Activated CD8-positive, alpha-beta T cell treated with anti-CD3 and anti-CD28 coated beads, Interleukin-2, amount 10 ng/mL, durations not matched to agents 7 days and 5 days (primary cell): ENCODE measurements at regions of chr5 and their contacts with region 1.

Region 1: DNA sequence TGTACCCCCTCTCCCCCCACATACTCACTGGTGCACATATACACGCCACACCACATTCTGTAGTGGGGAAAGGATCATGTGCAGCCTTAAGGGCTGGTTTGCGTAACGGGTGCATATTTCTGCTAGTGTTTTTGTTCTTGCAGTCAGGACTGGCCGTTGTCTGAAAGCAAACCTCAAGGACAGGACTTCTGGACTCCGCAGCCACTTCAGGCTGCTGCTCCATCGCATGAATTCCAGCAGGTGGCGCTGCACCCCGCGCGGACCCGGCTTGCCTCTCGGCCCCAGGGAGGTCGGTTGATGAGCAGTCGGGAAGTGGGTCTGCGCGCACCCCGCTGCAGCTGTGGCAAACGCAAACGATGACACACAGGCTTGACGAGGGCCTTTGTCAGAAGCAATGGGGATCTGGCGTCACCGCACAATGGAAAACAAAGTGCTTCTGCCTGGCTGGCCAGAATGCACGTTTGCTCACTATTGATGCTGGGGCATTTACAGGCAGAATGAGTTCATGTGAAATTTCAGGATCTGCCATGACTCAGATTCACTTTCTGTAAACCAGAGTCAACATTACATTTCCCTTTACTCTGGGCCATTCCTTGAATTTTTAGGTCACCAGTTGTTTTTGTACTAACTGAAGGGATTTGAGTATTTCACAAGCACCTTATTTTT is 36.3 kb upstream of the GLRX start:
- DNase-seq: peak; percentile 91
- ATAC-seq: peak; percentile 96
- H3K4me3 Mint-ChIP-seq: peak overlapping the region; percentile 36
- H3K27ac Mint-ChIP-seq: peak overlapping the region; percentile 60
- H3K4me1 Mint-ChIP-seq: peaks cover 44% of the 10 kb centered on the region
- H3K27me3 Mint-ChIP-seq: peaks cover 2% of the 10 kb centered on the region

Region 2: GRCh38 chr5:94693043-94693822 is 1165.6 kb before region 1 on chr5:
- CTCF ChIA-PET with region 1: no interaction called
- POLR2A ChIA-PET with region 1: no interaction called
- DNase-seq: no peak
- ATAC-seq: no peak
- H3K4me3 Mint-ChIP-seq: no peak overlapping the region
- H3K27ac Mint-ChIP-seq: no peak overlapping the region
- H3K4me1 Mint-ChIP-seq: no peaks in the 10 kb centered on the region
- H3K27me3 Mint-ChIP-seq: no peaks in the 10 kb centered on the region

Region 3: DNA sequence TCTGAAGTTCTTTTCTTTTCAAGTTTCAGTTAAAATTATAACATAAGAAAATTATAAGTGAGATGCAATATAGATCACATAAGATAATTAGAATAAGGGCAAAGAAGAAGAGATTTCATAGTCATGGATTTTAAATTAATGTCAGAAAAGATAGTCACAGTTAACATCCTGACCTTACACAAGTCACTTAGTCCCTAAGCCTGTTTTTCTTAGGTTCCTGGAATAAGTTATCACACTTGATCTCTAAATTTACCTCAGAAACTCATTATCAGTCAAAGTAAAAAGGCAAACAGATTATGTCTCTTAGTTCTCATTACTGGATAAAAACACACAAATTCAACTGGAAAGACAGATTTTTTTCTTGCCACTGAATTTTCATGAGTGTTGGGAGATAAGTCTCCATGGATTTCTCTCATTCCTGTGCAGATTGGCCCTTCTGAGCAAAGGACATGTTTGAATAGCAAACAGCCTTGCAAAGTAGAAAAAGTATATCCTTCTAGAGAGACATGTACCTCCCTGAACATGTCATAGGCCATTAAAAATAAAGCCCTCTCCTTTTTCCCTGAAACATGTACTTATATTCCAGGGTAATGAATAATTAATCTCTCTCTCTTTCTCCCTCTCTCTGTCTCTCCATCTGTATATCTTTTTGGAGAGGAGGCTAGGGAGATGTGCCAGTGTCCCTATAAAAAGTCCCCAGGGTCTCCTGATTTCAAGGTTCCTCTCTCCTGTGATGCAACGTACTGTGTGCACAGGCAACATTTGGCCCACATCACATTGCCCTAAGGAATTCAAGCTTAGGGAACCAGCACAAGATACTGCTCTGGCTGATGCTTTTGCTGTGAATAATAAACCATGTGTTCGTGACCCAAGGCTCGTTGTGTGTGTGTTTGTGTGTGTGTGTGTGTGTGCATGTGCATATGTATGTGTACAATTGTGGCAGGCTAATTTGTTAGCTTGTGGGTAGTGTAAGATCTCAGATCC is 186.0 kb before region 1 on chr5:
- CTCF ChIA-PET with region 1: no interaction called
- POLR2A ChIA-PET with region 1: no interaction called
- DNase-seq: no peak
- ATAC-seq: no peak
- H3K4me3 Mint-ChIP-seq: no peak overlapping the region
- H3K27ac Mint-ChIP-seq: no peak overlapping the region
- H3K4me1 Mint-ChIP-seq: no peaks in the 10 kb centered on the region
- H3K27me3 Mint-ChIP-seq: peaks cover 19% of the 10 kb centered on the region

Region 4: GRCh38 chr5:95870105-95870672 is 11.4 kb after region 1 on chr5:
- CTCF ChIA-PET with region 1: interaction called, 34 read pairs
- POLR2A ChIA-PET with region 1: no interaction called
- DNase-seq: peak; percentile 42
- ATAC-seq: peak; percentile 56
- H3K4me3 Mint-ChIP-seq: peak overlapping the region; percentile 69
- H3K27ac Mint-ChIP-seq: peak overlapping the region; percentile 91
- H3K4me1 Mint-ChIP-seq: peaks cover 31% of the 10 kb centered on the region
- H3K27me3 Mint-ChIP-seq: no peaks in the 10 kb centered on the region

Region 5: DNA sequence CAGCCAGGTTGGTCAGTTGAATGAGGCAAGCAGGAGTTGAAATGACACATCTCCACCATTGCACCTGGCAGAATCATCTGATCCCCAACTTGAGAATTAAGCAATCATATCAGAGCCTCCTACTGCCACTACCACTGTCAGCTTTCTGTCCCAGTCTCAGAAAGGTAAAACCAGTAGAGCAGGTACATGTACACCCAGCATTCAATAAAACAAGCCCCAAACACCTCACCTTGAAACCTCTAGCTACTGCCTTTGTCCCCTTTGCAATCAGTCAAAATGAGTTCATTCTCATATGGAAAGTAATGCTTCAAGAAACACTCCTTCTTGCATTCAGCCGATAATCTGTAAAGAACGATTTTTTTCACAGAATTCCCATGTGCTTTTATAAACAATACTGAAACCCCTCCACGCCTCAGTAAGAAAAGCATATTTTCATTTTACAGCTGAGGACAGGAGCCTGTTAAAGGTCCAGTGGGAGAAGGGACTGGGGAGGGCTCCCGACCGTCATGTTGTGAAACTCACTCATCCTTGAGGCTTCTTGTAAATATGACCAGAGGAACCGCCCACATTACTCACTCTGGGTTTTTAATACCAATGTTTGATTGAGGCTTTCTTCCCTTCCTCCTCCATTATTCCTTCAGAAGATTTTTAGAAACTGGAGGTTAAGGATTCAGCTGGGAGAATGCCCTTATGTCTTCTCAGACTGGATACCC is 25.0 kb after region 1 on chr5:
- CTCF ChIA-PET with region 1: no interaction called
- POLR2A ChIA-PET with region 1: no interaction called
- DNase-seq: no peak
- ATAC-seq: no peak
- H3K4me3 Mint-ChIP-seq: no peak overlapping the region
- H3K27ac Mint-ChIP-seq: no peak overlapping the region
- H3K4me1 Mint-ChIP-seq: peaks cover under 1% of the 10 kb centered on the region
- H3K27me3 Mint-ChIP-seq: no peaks in the 10 kb centered on the region

Region 6: DNA sequence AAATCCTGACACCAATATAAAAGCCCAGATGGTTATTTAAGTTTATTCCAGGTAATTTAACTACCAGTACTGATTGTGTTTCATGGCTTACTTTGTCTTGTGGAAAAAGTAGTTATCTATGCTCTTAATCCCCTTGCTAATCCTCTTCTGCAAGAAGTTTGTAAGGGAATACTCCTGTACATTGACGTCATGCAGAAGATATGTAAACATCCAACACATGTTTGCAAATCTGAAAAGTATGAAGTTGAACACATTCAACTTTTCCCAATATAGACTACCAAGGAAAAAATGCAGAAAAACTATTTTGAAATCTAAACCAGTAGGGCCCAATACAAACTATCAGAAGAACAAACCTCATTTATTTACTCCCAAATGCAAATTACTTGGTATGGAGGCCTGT is 159.2 kb after region 1 on chr5:
- CTCF ChIA-PET with region 1: no interaction called
- POLR2A ChIA-PET with region 1: no interaction called
- DNase-seq: no peak
- ATAC-seq: no peak
- H3K4me3 Mint-ChIP-seq: no peak overlapping the region
- H3K27ac Mint-ChIP-seq: no peak overlapping the region
- H3K4me1 Mint-ChIP-seq: peaks cover 10% of the 10 kb centered on the region
- H3K27me3 Mint-ChIP-seq: no peaks in the 10 kb centered on the region